ENCODE measurements at regions of chr13 and their contacts with region 1.

Region 1: GRCh38 chr13:20773194-20774080 is at the start of gene EEF1AKMT1:
- DNase-seq: peak; percentile 89 to 97 (median 94)
- ATAC-seq: peak; percentile 88
- H3K4me3 ChIP-seq: peak within 1 kb of the TSS; percentile 75
- H3K4me3 Mint-ChIP-seq: peak within 1 kb of the TSS; percentile 98
- H3K27ac ChIP-seq: peak within 1 kb of the TSS; percentile 90 to 92
- H3K27ac Mint-ChIP-seq: peak within 1 kb of the TSS; percentile 98
- H3K4me1 ChIP-seq: peaks cover 31% of the 10 kb centered on the region
- H3K4me1 Mint-ChIP-seq: peaks cover 40% of the 10 kb centered on the region
- H3K27me3 ChIP-seq: no peaks in the 10 kb centered on the region
- H3K27me3 Mint-ChIP-seq: no peaks in the 10 kb centered on the region
- CTCF ChIP-seq: no peak
- total RNA-seq, gene EEF1AKMT1: 1.9 to 2.5 TPM

Region 2: DNA sequence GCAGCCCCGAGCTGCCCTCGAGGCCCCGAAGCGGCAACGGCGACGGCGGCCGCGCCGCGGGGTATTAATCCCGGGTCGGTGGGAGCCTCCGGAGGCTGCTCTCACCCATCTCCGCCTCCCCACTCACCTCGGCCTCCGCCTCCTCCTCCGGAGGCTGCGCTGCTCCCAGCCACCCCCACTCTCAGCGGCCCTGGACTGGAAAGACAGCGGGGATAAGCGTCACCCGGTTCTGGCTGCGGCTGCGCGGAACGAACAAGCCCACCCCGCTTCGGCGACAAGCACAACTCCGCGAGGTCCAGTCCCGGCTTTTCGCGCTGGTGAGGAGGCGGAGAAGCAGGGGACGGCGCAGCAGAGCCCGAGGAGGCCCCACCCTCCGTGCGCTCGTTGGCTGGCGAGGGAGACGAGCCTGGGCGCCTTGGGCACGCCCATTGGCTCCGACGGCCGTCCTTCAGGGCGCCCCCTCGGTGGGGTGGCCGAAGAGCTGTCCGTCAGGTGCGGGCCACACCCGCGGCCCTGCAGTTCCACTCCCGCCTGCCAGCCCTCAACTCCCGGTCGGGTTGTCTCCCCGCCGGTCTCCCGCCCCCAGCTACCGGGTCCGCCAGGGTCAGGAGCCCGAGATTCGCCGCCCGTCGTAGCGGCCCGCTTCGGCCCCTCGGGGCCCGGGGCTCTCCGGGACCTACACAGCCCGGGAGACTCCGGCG is 910.0 kb before region 1 on chr13 and contains the start of gene ZMYM5:
- CTCF ChIA-PET with region 1: no interaction called
- POLR2A ChIA-PET with region 1: interaction called, 5 read pairs
- intact Hi-C with region 1: loop called in 1 of 2 experiments (anchors 10 kb)
- DNase-seq: peak; percentile 85 to 98 (median 93)
- ATAC-seq: peak; percentile 81
- H3K4me3 ChIP-seq: peak within 1 kb of the TSS; percentile 84
- H3K4me3 Mint-ChIP-seq: peak within 1 kb of the TSS; percentile 98
- H3K27ac ChIP-seq: peak within 1 kb of the TSS; percentile 92
- H3K27ac Mint-ChIP-seq: peak within 1 kb of the TSS; percentile 91
- H3K4me1 ChIP-seq: peaks cover 33% of the 10 kb centered on the region
- H3K4me1 Mint-ChIP-seq: peaks cover 37% of the 10 kb centered on the region
- H3K27me3 ChIP-seq: no peaks in the 10 kb centered on the region
- H3K27me3 Mint-ChIP-seq: no peaks in the 10 kb centered on the region
- CTCF ChIP-seq: no peak
- total RNA-seq, gene ZMYM5: 29.2 to 32.1 TPM

Region 3: DNA sequence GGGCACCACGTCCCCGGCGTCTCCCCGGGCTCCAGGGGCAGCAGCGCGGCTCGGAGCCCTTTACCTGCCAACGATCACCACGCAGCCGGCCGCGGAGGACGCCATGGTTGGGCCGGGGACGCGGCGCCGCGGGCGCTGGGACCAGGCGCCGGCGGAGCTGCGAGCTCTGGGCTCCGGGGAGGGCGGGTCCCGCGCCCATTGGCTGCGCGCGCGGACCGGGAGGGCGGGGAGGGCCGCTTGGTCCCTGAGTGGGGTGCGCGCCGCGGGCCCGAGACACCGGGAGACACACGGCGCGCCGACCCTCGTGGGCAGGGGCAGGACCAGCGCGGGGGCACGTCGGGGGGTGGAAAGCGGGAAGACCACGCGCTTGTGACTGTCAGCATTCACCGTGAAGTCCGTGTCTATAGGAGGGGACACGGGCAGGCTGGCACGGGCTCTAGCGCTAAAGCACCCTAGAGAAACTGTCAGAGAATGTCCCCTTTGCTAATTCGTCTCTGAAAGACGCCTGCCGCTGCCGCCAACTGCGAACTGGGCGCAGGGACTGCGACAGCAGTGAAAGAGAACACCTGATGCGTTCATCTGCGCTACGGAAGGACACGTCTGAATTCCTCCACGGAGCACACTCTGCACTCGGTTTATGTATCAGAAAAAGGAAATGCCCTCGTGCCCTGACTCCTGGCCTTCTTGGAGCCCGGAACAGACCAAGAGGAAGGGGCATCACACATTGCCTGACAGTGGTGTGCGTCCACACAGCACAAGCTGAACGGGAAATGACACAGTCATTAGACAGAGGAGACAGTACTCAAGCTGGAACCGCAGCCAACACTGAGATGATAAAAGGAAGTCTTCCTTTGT is 247.5 kb before region 1 on chr13 and contains the start of gene CRYL1:
- CTCF ChIA-PET with region 1: no interaction called
- POLR2A ChIA-PET with region 1: interaction called, 4 read pairs
- intact Hi-C with region 1: loop called (anchors 5 to 10 kb)
- DNase-seq: peak; percentile 53 to 88 (median 70)
- ATAC-seq: peak; percentile 86
- H3K4me3 ChIP-seq: peak within 1 kb of the TSS; percentile 68
- H3K4me3 Mint-ChIP-seq: peak within 1 kb of the TSS; percentile 97
- H3K27ac ChIP-seq: peak within 1 kb of the TSS; percentile 59 to 66
- H3K27ac Mint-ChIP-seq: peak within 1 kb of the TSS; percentile 94
- H3K4me1 ChIP-seq: peaks cover 21% of the 10 kb centered on the region
- H3K4me1 Mint-ChIP-seq: peaks cover 28% of the 10 kb centered on the region
- H3K27me3 ChIP-seq: no peaks in the 10 kb centered on the region
- H3K27me3 Mint-ChIP-seq: peaks cover 6% of the 10 kb centered on the region
- CTCF ChIP-seq: no peak
- total RNA-seq, gene CRYL1: 7.9 to 8.0 TPM

Region 4: DNA sequence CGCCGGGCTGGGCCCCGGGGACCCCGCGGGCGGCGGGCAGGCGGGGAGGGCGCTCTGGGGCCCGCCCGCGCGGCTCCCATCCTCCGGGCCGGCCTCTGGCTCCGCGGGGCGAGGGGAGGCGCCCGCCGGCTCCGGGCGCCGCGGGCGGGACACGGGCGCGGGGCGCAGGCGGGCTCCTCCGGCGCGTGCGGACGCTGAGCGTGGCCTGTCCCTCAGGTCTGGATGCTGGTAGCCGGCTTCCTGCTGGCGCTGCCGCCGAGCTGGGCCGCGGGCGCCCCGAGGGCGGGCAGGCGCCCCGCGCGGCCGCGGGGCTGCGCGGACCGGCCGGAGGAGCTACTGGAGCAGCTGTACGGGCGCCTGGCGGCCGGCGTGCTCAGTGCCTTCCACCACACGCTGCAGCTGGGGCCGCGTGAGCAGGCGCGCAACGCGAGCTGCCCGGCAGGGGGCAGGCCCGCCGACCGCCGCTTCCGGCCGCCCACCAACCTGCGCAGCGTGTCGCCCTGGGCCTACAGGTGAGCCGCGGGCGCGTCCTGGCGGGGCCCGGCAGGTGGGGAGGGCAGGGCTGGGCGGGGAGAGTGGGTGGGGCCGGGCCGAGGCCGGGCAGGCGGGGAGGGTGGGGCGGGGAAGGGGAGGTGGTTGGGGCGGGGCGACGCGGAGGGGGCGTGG is 69.5 kb before region 1 on chr13:
- CTCF ChIA-PET with region 1: interaction called, 7 read pairs
- POLR2A ChIA-PET with region 1: interaction called, 15 read pairs
- intact Hi-C with region 1: loop called in 1 of 2 experiments (anchors 2 kb)
- DNase-seq: peak; percentile 50 to 91 (median 70)
- ATAC-seq: peak; percentile 91
- H3K4me3 ChIP-seq: no peak overlapping the region
- H3K4me3 Mint-ChIP-seq: no peak overlapping the region
- H3K27ac ChIP-seq: no peak overlapping the region
- H3K27ac Mint-ChIP-seq: no peak overlapping the region
- H3K4me1 ChIP-seq: peaks cover 14% of the 10 kb centered on the region
- H3K4me1 Mint-ChIP-seq: peaks cover 7% of the 10 kb centered on the region
- H3K27me3 ChIP-seq: peaks cover 18 to 33% of the 10 kb centered on the region in 2 experiments
- H3K27me3 Mint-ChIP-seq: peaks cover 35% of the 10 kb centered on the region
- CTCF ChIP-seq: peak; percentile 21

Region 5: GRCh38 chr13:20902438-20903163 is 129.2 kb after region 1 on chr13 and contains the start of gene XPO4:
- CTCF ChIA-PET with region 1: no interaction called
- POLR2A ChIA-PET with region 1: interaction called, 16 read pairs
- intact Hi-C with region 1: loop called in 1 of 2 experiments (anchors 5 kb)
- DNase-seq: peak; percentile 52 to 89 (median 70)
- ATAC-seq: peak; percentile 96
- H3K4me3 ChIP-seq: peak within 1 kb of the TSS; percentile 99
- H3K4me3 Mint-ChIP-seq: peak within 1 kb of the TSS; percentile 97
- H3K27ac ChIP-seq: peak within 1 kb of the TSS; percentile 79 to 88
- H3K27ac Mint-ChIP-seq: peak within 1 kb of the TSS; percentile 90
- H3K4me1 ChIP-seq: peaks cover 22% of the 10 kb centered on the region
- H3K4me1 Mint-ChIP-seq: peaks cover 32% of the 10 kb centered on the region
- H3K27me3 ChIP-seq: no peaks in the 10 kb centered on the region
- H3K27me3 Mint-ChIP-seq: no peaks in the 10 kb centered on the region
- CTCF ChIP-seq: no peak
- total RNA-seq, gene XPO4: 22.5 to 22.7 TPM

Region 6: DNA sequence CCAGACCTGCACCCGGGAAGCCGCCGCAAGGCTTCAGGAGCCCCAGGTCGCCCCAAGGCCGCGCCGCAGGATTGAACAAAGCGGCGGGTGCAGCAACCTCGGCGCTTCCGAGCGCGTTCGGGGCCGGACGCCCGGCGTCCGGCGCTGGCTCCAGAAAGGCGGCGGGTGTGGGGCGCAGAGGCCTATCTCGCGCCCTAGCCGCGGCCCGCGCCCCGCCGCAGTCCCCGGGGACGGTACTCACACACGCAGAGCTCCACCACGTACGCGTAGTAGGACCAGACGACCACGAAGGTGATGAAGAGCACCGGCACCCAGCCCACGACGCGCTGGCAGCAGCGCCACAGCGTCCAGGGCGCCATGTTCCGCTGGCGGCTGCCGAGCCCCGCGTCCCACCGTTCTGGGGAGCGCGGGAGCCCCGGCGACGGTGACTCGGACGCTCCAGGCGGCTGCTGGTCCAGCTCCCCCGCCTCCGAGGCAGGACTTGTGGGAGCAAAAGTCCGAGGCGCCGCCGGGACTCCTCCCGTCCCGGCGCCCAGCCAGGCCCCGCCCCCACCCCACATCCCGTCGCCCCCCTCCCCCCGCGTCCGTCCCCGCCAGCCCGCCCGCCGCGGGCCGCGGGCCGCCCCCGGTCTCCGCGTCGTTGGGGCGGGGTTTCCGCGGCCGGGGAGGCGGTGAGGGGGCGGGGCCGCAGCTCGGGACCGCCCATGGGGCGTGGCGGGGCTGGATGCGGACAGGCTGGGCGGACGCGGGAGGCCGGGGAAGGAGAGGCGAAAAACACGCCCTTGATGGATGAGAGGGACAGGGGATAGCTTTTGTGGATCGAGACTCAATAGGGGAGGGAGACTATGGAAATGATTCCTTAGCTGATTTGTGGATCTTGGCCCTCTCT is 685.6 kb after region 1 on chr13 and contains the start of gene ZDHHC20:
- CTCF ChIA-PET with region 1: no interaction called
- POLR2A ChIA-PET with region 1: interaction called, 18 read pairs
- intact Hi-C with region 1: no loop called
- DNase-seq: peak; percentile 75 to 95 (median 88)
- ATAC-seq: peak; percentile 85
- H3K4me3 ChIP-seq: peak within 1 kb of the TSS; percentile 90
- H3K4me3 Mint-ChIP-seq: peak within 1 kb of the TSS; percentile 97
- H3K27ac ChIP-seq: peak within 1 kb of the TSS; percentile 56 to 84
- H3K27ac Mint-ChIP-seq: peak within 1 kb of the TSS; percentile 92
- H3K4me1 ChIP-seq: peaks cover 12% of the 10 kb centered on the region
- H3K4me1 Mint-ChIP-seq: peaks cover 42% of the 10 kb centered on the region
- H3K27me3 ChIP-seq: no peaks in the 10 kb centered on the region
- H3K27me3 Mint-ChIP-seq: no peaks in the 10 kb centered on the region
- CTCF ChIP-seq: no peak
- total RNA-seq, gene ZDHHC20: 62.8 to 65.1 TPM